Activated B cell treated with CpG ODN at 0.5 μM for 24 hours (primary cell): ENCODE measurements at regions of chr17 and their contacts with region 1.

Region 1: DNA sequence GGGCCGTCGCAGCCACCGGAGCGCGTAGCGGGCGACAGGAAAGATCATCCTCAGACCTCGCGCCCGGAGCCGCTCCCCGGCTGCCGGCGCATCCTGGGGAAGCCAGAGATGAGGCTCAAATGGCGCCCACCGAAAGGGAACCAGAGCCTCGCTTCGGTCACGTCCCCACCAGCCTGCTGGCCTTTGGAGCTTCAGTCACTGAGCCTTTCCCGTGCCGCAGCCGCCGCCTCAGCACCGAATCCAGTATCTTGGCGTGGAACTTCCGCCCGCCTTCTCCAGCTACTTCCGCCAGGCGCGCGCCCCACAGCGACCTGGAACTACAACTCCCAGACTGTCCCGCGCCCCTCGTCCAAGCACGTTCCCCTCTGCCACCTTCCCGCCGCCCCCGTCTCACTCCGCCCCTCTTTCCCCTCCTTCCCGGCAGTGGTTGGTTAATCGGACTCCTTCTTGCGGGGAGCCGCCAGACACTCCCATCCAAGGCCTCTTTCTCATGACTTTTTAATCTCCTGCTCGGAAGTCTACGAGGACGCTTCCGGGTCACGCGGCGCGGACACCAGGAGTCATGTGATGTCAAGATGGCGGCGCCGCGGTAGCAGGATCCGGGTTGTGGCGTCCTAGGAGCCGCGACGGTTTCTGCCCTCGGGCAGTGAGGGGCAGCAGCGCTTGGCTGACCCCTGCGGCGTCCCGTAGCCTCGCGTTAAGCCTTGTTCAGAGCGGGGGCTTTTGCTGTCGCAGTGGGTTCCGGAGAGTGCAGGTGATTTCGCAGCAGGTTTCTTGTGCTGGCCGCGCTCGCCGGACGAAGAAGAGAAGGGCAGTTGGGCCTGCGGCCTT is at the starts of genes SMCR8 and TOP3A:
- DNase-seq: peak; percentile 91
- ATAC-seq: peak; percentile 94
- H3K4me3 Mint-ChIP-seq: peak within 1 kb of the TSS; percentile 100
- H3K27ac Mint-ChIP-seq: peak within 1 kb of the TSS; percentile 100
- H3K4me1 Mint-ChIP-seq: peaks cover 77% of the 10 kb centered on the region
- H3K27me3 Mint-ChIP-seq: no peaks in the 10 kb centered on the region
- CTCF ChIP-seq: no peak
- total RNA-seq, gene SMCR8: 32.5 and 36.9 TPM in 2 replicates
- total RNA-seq, gene TOP3A: 44.8 and 46.4 TPM in 2 replicates

Region 2: GRCh38 chr17:18158022-18158600 is 156.8 kb before region 1 on chr17:
- CTCF ChIA-PET with region 1: no interaction called
- POLR2A ChIA-PET with region 1: interaction called, 4 read pairs
- intact Hi-C with region 1: loop called (anchors 10 kb)
- DNase-seq: peak; percentile 91
- ATAC-seq: peak; percentile 75
- H3K4me3 Mint-ChIP-seq: peak overlapping the region; percentile 89
- H3K27ac Mint-ChIP-seq: peak overlapping the region; percentile 85
- H3K4me1 Mint-ChIP-seq: peaks cover 23% of the 10 kb centered on the region
- H3K27me3 Mint-ChIP-seq: no peaks in the 10 kb centered on the region
- CTCF ChIP-seq: no peak

Region 3: DNA sequence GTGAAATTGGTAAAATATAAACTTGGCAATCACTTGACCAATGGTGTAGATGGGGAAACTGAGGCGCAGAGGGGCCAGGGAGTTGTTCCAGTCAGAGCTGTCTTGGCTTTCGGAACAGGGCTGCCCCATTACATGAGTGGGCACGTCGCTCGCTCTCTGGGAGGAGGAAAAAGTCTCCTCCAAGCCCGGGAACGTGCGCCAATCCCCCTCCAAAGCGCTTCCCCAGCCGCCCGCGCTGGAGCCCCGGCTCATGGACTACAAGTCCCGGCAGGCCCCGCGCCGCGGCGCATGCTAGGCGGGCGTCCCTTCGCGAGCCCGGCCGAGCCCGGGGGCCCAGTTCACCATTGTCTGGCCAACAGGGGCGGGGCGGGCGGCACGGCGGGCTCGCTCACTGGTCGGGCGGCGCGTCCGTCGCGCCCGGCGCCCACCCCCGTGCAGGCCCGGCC is 89.8 kb before region 1 on chr17:
- CTCF ChIA-PET with region 1: no interaction called
- POLR2A ChIA-PET with region 1: no interaction called
- intact Hi-C with region 1: loop called (anchors 1 kb)
- DNase-seq: peak; percentile 95
- ATAC-seq: peak; percentile 98
- H3K4me3 Mint-ChIP-seq: peak overlapping the region; percentile 38
- H3K27ac Mint-ChIP-seq: peak overlapping the region; percentile 12
- H3K4me1 Mint-ChIP-seq: peaks cover 9% of the 10 kb centered on the region
- H3K27me3 Mint-ChIP-seq: no peaks in the 10 kb centered on the region
- CTCF ChIP-seq: no peak

Region 4: DNA sequence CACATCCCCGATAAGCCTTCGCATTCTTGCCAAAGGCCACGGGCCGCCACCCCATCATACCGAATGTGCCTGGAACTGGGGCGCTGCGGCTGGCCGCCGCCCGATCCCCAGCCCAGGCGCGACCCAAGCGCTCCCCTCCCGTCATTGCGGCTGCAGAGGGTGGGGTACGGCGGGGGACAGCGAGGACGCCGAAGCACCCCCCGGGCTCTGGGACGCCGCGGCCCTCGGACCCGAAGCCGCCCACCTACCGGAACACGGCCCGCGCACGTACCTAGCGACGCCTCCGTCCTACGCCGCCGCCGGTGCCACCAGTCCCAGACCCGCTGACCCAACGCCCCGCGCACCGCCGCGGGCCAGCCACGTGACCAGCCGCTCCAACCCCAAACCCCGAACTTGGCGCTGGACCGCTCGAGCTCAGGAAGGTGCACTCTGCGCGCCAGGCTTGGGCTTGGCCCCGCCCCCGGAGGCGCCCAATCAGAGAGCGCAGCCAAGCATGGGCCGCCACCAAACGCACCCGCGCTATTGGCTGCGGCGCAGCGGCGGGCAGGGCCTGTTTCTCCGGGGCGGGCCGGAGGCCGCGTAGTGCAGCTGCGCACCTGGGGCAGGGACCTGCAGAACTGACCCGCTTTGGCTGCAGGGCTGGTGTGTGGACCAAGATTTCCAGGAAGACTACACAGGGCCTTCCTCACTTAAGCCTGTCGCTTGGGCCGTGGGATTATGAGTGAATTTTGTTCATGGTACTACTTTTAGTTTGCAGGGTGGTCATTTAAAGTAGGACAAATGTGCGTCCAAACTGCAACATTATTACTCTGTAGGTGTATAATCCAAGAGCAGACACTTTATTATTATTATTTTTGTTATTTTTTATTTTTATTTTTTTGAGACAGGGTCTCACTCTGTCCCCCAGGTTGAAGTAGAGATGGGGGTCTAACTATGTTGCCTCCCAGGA is 48.4 kb after region 1 on chr17 and contains the start of gene SHMT1:
- CTCF ChIA-PET with region 1: no interaction called
- POLR2A ChIA-PET with region 1: interaction called, 4 read pairs
- intact Hi-C with region 1: loop called (anchors 2 kb)
- DNase-seq: peak; percentile 86
- ATAC-seq: peak; percentile 100
- H3K4me3 Mint-ChIP-seq: peak within 1 kb of the TSS; percentile 92
- H3K27ac Mint-ChIP-seq: peak within 1 kb of the TSS; percentile 71
- H3K4me1 Mint-ChIP-seq: peaks cover 17% of the 10 kb centered on the region
- H3K27me3 Mint-ChIP-seq: no peaks in the 10 kb centered on the region
- CTCF ChIP-seq: no peak
- total RNA-seq, gene SHMT1: 17.9 and 18.4 TPM in 2 replicates